ENCODE measurements at regions of chrX and their contacts with region 1.

Region 1: GRCh38 chrX:130994671-130995070 is 63.5 kb upstream of the ARHGAP36 start:
- DNase-seq: peak; percentile 48
- H3K4me3 Mint-ChIP-seq: no peak overlapping the region
- H3K27ac Mint-ChIP-seq: no peak overlapping the region
- H3K4me1 Mint-ChIP-seq: no peaks in the 10 kb centered on the region
- H3K27me3 Mint-ChIP-seq: peaks cover 87% of the 10 kb centered on the region
- CTCF ChIP-seq: peak; percentile 53

Region 2: GRCh38 chrX:130793966-130794365 is 200.7 kb before region 1 on chrX:
- CTCF ChIA-PET with region 1: no interaction called
- POLR2A ChIA-PET with region 1: no interaction called
- intact Hi-C with region 1: no loop called
- DNase-seq: peak; percentile 27
- H3K4me3 Mint-ChIP-seq: no peak overlapping the region
- H3K27ac Mint-ChIP-seq: no peak overlapping the region
- H3K4me1 Mint-ChIP-seq: no peaks in the 10 kb centered on the region
- H3K27me3 Mint-ChIP-seq: peaks cover 27% of the 10 kb centered on the region
- CTCF ChIP-seq: no peak

Region 3: GRCh38 chrX:131366407-131366806 is 371.7 kb after region 1 on chrX:
- CTCF ChIA-PET with region 1: interaction called, 11 read pairs
- POLR2A ChIA-PET with region 1: no interaction called
- intact Hi-C with region 1: no loop called
- DNase-seq: peak; percentile 9
- H3K4me3 Mint-ChIP-seq: no peak overlapping the region
- H3K27ac Mint-ChIP-seq: no peak overlapping the region
- H3K4me1 Mint-ChIP-seq: no peaks in the 10 kb centered on the region
- H3K27me3 Mint-ChIP-seq: peaks cover 71% of the 10 kb centered on the region
- CTCF ChIP-seq: peak; percentile 5

Region 4: DNA sequence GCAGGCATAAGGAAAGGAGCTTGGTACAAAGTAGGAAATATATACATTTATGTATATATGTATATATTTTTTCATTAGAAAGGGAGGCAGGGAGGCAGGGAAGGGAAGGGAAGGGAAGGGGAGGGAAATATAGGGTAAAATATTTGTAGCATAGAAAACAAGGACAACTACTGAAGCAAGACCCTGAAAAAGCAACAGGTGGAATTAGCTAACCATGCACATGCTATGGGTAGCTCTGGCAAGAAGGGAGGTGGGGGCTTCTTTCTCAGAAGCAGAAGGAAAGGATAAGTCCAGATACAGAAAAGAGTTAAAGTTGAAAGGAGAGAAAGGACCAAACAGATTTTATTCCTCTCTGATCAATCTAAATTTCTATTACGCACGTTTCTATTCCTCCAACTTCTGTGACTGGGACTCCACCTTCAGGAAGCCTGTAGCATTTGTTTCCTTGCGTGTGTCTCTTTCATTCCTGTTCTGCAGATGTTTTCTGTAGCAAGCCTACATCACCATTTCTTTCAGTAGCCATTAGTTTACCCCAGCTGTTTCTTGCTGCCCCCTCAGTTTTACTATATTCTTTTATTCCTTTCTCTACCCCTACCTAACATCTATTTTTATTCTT is 632.1 kb after region 1 on chrX:
- CTCF ChIA-PET with region 1: interaction called, 10 read pairs
- POLR2A ChIA-PET with region 1: no interaction called
- intact Hi-C with region 1: loop called (anchors 1 kb)
- DNase-seq: peak; percentile 21
- H3K4me3 Mint-ChIP-seq: no peak overlapping the region
- H3K27ac Mint-ChIP-seq: no peak overlapping the region
- H3K4me1 Mint-ChIP-seq: no peaks in the 10 kb centered on the region
- H3K27me3 Mint-ChIP-seq: peaks cover 27% of the 10 kb centered on the region
- CTCF ChIP-seq: peak; percentile 11